ENCODE measurements at regions of chr19 and their contacts with region 1.

Region 1: GRCh38 chr19:12938234-12939025 is at the start of gene CALR:
- DNase-seq: peak; percentile 97
- ATAC-seq: peak; percentile 93
- H3K4me3 Mint-ChIP-seq: peak within 1 kb of the TSS; percentile 99
- H3K27ac Mint-ChIP-seq: peak within 1 kb of the TSS; percentile 92
- H3K4me1 Mint-ChIP-seq: peaks cover 46% of the 10 kb centered on the region
- H3K27me3 Mint-ChIP-seq: no peaks in the 10 kb centered on the region
- total RNA-seq, gene CALR: 522 to 531 TPM

Region 2: GRCh38 chr19:12881172-12881808 is 57.1 kb before region 1 on chr19 and contains the start of gene DNASE2:
- POLR2A ChIA-PET with region 1: interaction called, 23 read pairs
- DNase-seq: peak; percentile 91
- ATAC-seq: peak; percentile 69
- H3K4me3 Mint-ChIP-seq: peak within 1 kb of the TSS; percentile 94
- H3K27ac Mint-ChIP-seq: peak within 1 kb of the TSS; percentile 88
- H3K4me1 Mint-ChIP-seq: peaks cover 21% of the 10 kb centered on the region
- H3K27me3 Mint-ChIP-seq: no peaks in the 10 kb centered on the region
- total RNA-seq, gene DNASE2: 29.0 to 30.4 TPM

Region 3: DNA sequence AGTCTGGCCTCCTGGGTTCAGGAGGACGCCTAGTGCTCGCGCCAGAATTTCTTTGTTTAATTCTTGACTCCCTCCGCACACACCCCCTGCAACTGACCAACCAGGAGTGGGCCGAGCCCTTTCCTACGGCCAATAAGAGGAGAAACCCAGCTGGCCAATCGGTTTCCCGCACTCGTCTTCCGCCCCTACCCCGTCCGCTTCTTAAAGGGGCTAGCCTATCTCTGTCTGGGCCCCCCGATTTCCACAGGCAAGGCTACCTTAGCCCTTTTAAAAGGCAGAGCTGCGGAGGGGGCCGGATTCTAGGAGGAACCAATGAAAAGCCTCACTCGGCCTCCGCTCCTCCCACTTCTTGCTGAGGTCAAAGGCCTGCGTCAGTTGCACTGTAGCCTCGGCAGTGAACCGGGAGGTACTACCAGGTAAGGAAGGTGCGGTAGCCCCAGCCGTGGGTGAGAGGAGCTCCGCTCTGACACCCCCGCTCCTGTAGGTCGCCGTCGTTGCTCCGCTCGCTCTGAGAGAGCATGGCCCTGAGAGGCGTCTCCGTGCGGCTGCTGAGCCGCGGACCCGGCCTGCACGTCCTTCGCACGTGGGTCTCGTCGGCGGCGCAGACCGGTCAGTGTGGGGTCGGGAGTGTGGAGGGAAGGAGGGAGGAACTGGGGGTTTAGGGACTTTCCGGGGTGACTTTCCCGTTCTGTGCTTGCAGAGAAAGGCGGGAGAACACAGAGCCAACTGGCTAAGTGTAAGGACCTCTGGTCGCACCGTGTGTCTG is 47.5 kb before region 1 on chr19 and contains the start of gene GCDH:
- POLR2A ChIA-PET with region 1: interaction called, 20 read pairs
- DNase-seq: peak; percentile 88
- ATAC-seq: peak; percentile 95
- H3K4me3 Mint-ChIP-seq: peak within 1 kb of the TSS; percentile 95
- H3K27ac Mint-ChIP-seq: peak within 1 kb of the TSS; percentile 91
- H3K4me1 Mint-ChIP-seq: peaks cover 22% of the 10 kb centered on the region
- H3K27me3 Mint-ChIP-seq: peaks cover 4% of the 10 kb centered on the region
- total RNA-seq, gene GCDH: 39.7 to 43.4 TPM

Region 4: DNA sequence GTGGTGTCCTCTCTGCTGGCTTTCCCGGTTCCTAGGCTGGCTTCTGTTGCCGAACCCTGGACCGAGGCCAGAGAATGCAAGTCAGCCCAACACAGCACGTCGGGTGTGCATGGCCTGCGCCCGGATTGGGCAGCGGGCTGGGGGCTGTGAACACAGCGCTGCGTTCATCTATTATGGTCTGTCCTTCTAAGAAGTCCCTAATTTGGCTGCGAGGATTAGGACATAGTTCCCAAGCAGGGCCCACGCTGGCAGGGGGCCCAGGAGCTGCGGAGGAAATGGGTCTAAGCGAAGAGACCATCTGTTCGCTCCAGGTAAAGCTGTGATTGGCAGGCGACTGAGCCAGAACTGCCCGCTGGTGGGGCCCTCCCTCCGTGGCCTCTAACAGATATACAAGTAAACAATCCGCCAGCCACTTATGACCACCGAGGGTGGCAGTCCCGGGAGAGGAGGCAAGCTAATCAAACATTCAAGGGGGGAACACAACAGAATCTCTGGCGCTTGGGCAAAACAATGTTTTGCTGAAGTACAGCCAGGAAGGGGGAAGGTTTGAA is 25.3 kb before region 1 on chr19:
- POLR2A ChIA-PET with region 1: interaction called, 25 read pairs
- DNase-seq: no peak
- ATAC-seq: no peak
- H3K4me3 Mint-ChIP-seq: no peak overlapping the region
- H3K27ac Mint-ChIP-seq: peak overlapping the region; percentile 73
- H3K4me1 Mint-ChIP-seq: peaks cover 25% of the 10 kb centered on the region
- H3K27me3 Mint-ChIP-seq: no peaks in the 10 kb centered on the region

Region 5: DNA sequence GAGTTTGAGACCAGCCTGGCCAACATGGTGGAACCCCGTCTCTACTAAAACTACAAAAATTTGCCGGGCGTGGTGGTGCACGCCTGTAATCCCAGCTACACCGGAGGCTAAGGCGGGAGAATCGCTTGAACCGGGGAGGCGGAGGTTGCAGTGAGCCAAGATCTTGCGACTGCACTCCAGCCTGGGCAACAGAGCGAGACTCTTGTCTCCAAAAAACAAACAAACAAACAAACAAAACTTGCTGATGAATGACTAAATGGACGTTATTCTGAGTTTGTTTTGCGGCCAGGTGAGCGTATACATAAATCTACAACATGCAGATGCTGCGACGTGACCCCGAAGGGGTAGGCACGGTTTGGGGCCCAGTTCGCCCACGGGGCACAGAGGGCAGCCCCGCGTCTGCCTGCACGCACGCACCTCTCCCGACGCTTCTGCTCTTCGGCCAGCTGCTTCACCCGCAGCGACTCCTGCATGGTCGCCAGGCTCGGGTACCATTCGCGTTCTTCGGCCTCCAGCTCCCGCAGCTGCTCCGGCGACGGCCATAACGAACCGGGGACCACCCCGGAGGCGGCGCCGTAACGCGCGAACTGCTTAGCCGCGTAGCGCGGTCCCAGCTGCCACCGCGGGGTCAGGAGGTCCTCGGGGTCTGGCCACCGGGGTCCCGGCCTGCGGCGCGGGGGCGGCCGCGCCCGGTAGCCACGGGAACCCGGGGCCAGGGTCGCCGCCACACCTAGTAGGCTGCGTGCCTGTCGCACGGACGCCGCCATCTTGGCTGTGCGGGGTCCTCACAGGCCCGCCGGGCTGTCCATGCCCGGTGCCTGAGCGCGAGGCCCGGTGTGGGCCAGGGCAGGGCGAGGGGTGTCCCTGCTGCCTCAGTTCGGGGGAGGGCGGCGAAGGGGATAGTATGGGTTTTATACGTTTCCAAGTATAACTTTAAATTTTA is 18.3 kb after region 1 on chr19 and contains the start of gene GADD45GIP1:
- POLR2A ChIA-PET with region 1: interaction called, 15 read pairs
- DNase-seq: peak; percentile 88
- ATAC-seq: peak; percentile 95
- H3K4me3 Mint-ChIP-seq: peak within 1 kb of the TSS; percentile 95
- H3K27ac Mint-ChIP-seq: peak within 1 kb of the TSS; percentile 97
- H3K4me1 Mint-ChIP-seq: peaks cover 18% of the 10 kb centered on the region
- H3K27me3 Mint-ChIP-seq: no peaks in the 10 kb centered on the region
- total RNA-seq, gene GADD45GIP1: 18.4 to 19.4 TPM